ENCODE measurements at regions of chr13 and their contacts with region 1.

Region 1: GRCh38 chr13:98977568-98978265 is at the start of gene DOCK9:
- DNase-seq: no peak
- ATAC-seq: no peak
- H3K4me3 Mint-ChIP-seq: no peak within 1 kb of the TSS
- H3K27ac Mint-ChIP-seq: no peak within 1 kb of the TSS
- H3K4me1 Mint-ChIP-seq: peaks cover 78% of the 10 kb centered on the region
- H3K27me3 Mint-ChIP-seq: no peaks in the 10 kb centered on the region
- CTCF ChIP-seq: no peak
- total RNA-seq, gene DOCK9: 33.4 to 36.9 TPM

Region 2: GRCh38 chr13:98890186-98890585 is 87.5 kb before region 1 on chr13:
- CTCF ChIA-PET with region 1: no interaction called
- POLR2A ChIA-PET with region 1: no interaction called
- intact Hi-C with region 1: loop called (anchors 5 kb)
- DNase-seq: peak; percentile 78
- ATAC-seq: peak; percentile 94
- H3K4me3 Mint-ChIP-seq: no peak overlapping the region
- H3K27ac Mint-ChIP-seq: peak overlapping the region; percentile 30
- H3K4me1 Mint-ChIP-seq: peaks cover 21% of the 10 kb centered on the region
- H3K27me3 Mint-ChIP-seq: no peaks in the 10 kb centered on the region
- CTCF ChIP-seq: no peak

Region 3: DNA sequence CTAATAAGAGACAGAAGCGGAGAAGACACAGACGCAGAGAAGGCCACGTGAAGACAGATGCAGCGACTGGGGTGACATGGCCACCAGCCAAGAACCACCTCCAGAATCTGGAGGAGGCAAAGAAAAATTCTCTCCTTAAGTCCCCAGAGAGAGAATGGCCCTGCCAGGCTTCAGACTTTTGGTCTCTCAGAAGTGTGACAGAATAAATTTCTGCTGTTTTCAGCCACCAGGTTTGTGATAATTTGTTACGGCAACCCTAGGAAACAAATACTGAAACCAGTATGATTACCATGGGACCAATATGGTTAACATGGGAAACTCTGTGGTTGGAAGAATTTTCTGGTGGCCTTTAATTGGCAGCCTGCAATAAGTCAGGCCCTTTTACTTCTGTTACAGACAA is 64.1 kb after region 1 on chr13:
- CTCF ChIA-PET with region 1: no interaction called
- POLR2A ChIA-PET with region 1: no interaction called
- intact Hi-C with region 1: no loop called
- DNase-seq: no peak
- ATAC-seq: no peak
- H3K4me3 Mint-ChIP-seq: no peak overlapping the region
- H3K27ac Mint-ChIP-seq: no peak overlapping the region
- H3K4me1 Mint-ChIP-seq: peaks cover 76% of the 10 kb centered on the region
- H3K27me3 Mint-ChIP-seq: no peaks in the 10 kb centered on the region
- CTCF ChIP-seq: no peak